Left ventricle myocardium superior (tissue), 1 donor: ENCODE measurements at regions of chr6 and their contacts with region 1.

Region 1: GRCh38 chr6:108105571-108105970 is 31.0 kb upstream of the OSTM1 start:
- DNase-seq: no peak
- ATAC-seq: no peak

Region 2: DNA sequence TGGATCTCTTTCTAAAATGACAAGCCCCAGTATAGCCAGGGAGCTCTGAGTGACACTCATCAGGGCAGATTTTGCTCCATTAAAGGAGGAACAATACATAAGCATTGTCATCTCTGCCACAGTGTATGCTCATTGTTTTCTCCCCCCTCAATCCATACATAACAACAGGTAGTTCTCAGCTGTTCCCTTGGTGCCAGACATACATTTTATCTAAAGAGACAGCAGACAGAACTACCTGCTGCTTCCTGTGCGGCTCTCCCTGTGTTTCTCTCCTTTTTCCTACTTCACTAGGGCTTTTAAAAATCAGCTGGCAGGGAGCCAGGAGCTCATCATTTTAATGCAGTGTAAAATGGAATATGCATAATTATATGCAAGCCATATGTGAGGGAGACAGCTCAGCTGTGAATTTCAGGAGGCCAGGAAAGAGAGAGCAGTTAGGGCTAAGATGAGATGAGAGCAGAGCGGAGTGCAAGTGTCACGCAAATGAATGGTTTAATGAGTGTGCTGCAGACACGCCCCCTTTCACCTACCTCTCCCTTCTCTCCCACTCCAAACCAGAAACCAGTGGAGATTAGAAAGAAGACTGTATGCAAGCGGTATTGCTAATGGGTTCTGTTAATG is 519.6 kb before region 1 on chr6:
- intact Hi-C with region 1: no loop called
- DNase-seq: no peak
- ATAC-seq: no peak

Region 3: DNA sequence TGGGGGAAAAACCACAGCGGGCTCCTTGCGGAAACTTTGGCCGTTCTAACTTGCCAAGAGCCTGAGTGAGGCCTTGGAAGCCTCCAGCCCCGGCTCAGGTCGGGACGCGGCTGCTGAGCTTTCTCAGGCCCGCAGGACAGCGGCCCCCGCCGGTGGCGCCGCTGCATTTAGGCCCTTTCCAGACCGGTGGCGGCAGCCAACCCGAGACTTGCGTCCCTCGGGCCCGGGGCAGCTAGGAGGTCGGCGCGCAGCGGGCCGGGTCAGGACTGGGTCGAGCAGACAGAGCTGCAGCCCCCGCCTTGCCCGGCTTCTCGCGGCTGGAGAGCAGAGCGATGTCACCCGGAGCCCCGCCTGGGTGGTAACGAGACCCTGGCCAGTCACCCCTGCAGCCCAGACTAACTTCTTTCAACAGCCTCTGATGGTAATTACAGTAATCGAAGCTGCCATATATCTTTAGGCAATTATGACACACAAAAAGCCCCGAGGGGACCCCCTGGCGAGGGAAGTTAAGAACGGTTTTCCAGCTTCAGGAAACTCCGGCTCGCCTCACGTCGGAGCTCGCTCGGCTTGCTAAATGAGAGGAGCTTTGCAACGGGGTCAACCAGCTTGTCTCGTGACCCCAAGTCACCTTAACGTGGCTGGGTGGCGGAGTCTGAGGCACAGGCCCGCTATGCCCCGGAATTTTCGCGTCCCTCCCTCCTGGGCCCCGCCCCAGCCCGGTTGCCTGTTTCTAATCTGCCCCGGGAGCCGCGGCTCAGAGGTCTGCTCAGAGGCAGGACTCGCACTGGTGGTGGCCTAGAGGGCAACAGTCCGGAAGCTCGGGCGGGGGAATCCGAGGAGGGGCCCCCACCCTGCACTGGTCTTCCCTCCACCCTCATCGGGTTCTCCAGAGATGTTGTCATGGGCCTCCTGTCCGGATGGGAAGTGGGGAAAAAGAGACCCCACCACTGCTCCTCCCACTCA is 63.2 kb after region 1 on chr6:
- intact Hi-C with region 1: no loop called
- DNase-seq: peak; percentile 67
- ATAC-seq: peak; percentile 80

Region 4: DNA sequence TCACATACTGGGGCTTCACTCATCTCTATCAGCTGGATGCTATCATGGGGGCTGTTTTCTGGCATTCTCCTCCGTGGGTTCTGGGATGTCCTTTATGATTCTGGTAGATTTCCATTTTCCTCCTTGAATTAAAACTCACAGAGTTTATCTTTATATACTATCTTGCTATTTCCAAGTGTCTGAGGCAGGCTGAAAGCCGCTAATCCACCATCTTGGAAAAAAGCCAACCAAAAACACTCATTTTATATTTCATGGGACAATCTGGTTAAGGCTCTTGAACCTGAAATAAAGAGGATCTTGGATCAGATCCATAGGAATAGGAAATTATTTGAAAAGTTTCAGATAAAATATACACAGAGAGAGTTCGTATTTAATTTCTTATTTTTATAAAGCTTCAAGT is 275.3 kb after region 1 on chr6:
- intact Hi-C with region 1: no loop called
- DNase-seq: no peak
- ATAC-seq: no peak

Region 5: DNA sequence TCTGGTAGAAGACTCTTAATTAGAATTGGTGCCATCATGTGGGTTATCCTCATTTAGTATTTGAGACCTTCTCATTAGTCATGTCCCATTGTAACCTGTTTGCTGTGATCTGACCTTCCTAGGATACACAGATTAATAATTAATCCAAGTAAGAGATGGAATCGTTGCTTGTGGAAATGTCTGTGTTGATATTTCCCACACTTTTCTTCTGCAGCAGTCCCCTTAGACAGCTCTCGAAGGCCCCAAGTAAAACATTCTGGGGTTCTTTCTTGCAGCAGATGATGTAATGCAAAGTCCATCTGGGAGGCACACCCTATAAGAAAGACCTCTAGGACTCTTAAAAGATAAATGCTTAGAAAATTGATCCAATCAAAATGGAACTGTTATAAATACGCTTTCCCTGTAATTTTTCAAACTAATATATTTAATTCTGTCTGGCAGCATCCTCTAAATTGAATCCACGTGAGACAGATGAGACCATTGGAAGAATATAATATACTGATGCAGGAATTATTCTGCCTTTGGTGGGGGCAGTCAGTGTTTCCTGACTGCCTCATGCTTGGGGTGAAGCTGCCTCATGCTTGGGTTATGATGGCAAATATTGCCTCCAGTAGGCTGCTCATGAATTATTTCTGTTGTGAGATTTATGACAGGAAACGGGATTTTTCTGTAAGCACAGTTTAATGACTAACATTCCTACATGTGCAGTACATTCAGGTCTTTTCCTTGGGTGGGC is 688.1 kb after region 1 on chr6:
- intact Hi-C with region 1: loop called (anchors 5 kb)
- DNase-seq: no peak
- ATAC-seq: no peak